Vagina (tissue), 2 donors: ENCODE measurements at regions of chr12 and their contacts with region 1.

Region 1: DNA sequence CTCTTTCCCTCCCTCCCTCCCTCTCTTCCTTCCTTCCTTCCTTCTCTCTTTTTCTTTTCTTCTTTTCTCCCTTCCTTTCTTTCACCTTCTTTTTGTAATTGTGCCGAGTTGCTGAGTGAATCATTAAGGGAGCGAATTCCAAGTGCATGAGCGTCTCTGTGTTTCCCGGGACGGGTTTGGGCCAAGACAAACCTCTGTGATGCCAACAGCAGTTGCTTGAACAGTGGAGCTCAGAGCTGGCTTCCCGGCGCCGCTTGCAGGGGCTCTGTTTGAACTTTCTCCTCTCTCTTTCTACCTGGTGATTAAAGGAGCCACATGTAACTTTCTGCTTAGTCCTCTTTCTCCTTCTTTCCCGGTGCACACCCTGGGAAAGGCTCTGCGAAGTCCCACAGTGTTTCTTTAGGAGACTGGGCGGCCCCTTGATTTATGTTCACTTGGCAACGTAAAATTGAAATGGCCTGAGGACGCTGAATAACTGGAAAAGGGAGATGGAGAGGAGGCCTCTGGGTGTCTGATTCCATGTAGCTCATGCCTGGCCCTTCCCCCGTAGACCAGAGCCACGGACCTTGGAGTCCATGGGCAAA is 33.7 kb upstream of the MAP1LC3B2 start:
- DNase-seq: no peak
- H3K4me3 ChIP-seq: peak overlapping the region; percentile 21 to 29
- H3K27ac ChIP-seq: peak overlapping the region; percentile 71
- H3K4me1 ChIP-seq: peaks cover 58% of the 10 kb centered on the region
- H3K27me3 ChIP-seq: no peaks in the 10 kb centered on the region
- CTCF ChIP-seq: no peak
- POLR2A ChIP-seq: no peak

Region 2: DNA sequence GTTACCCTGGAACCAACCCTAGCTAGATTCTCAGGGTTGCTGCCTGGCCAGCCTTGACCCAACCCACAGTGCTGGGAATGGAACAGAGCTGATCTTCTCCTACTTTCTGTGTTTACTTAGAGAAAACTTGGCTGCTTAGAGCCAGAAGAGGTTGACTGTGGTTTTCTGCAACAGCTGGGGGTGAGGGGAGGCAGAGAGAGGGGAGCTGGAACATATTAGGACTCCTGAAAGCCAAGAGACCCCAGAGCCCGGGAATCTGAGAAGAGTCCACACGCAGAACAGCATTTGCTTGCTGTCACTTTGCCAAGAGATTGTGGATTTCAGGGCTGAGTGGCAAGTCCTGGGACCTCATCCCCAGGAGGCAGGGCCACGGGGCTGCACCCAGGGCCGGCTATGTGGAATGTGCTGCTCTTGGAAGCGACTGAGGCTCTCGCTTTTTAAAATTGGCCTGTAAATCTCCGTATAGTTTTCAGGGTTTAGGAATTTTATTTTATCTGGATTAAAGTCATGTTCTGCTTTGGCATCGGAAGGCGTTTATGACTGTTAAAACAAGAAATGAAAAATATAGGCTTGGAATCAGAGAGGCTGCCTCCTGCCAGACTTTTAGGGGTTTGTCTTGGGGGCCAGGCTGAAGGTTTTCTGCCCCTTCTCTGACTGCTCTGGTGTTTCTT is 225.7 kb before region 1 on chr12:
- intact Hi-C with region 1: loop called (anchors 10 kb)
- DNase-seq: no peak
- H3K4me3 ChIP-seq: no peak overlapping the region
- H3K27ac ChIP-seq: peak overlapping the region; percentile 39
- H3K4me1 ChIP-seq: peaks cover 38% of the 10 kb centered on the region
- H3K27me3 ChIP-seq: no peaks in the 10 kb centered on the region
- CTCF ChIP-seq: no peak
- POLR2A ChIP-seq: no peak